ENCODE measurements at regions of chr17 and their contacts with region 1.

Region 1: DNA sequence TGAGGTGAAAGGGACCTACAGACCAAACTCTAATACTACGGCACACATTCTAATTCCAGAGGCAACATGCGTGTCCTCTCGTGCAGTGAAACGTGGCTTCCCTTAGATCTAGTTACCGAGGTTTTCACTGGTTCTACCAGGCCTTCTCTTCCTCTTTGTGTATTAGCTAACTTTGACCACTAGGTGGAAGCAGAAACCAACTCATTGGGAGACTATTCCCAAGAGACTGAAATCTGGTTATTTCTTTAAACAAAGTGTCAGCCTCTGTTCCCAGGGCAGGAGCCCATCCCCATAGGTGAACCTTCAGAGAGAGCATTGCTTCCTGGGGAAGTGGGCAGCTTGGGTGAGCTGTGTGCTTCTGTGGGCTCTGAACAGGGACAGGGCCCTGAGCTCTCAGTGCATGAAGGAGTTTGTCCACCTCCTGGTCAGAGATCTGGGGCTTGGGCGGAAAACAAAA is 19.7 kb upstream of the RCVRN start:
- DNase-seq: peak; percentile 89
- H3K4me3 Mint-ChIP-seq: no peak overlapping the region
- H3K27ac Mint-ChIP-seq: peak overlapping the region; percentile 22
- H3K4me1 Mint-ChIP-seq: peaks cover 6% of the 10 kb centered on the region
- H3K27me3 Mint-ChIP-seq: no peaks in the 10 kb centered on the region
- CTCF ChIP-seq: peak; percentile 80

Region 2: GRCh38 chr17:9729034-9729650 is 195.6 kb before region 1 on chr17:
- CTCF ChIA-PET with region 1: interaction called, 17 read pairs
- POLR2A ChIA-PET with region 1: interaction called, 3 read pairs
- intact Hi-C with region 1: loop called (anchors 1 kb)
- DNase-seq: peak; percentile 67
- H3K4me3 Mint-ChIP-seq: no peak overlapping the region
- H3K27ac Mint-ChIP-seq: no peak overlapping the region
- H3K4me1 Mint-ChIP-seq: peaks cover 7% of the 10 kb centered on the region
- H3K27me3 Mint-ChIP-seq: no peaks in the 10 kb centered on the region
- CTCF ChIP-seq: peak; percentile 89

Region 3: DNA sequence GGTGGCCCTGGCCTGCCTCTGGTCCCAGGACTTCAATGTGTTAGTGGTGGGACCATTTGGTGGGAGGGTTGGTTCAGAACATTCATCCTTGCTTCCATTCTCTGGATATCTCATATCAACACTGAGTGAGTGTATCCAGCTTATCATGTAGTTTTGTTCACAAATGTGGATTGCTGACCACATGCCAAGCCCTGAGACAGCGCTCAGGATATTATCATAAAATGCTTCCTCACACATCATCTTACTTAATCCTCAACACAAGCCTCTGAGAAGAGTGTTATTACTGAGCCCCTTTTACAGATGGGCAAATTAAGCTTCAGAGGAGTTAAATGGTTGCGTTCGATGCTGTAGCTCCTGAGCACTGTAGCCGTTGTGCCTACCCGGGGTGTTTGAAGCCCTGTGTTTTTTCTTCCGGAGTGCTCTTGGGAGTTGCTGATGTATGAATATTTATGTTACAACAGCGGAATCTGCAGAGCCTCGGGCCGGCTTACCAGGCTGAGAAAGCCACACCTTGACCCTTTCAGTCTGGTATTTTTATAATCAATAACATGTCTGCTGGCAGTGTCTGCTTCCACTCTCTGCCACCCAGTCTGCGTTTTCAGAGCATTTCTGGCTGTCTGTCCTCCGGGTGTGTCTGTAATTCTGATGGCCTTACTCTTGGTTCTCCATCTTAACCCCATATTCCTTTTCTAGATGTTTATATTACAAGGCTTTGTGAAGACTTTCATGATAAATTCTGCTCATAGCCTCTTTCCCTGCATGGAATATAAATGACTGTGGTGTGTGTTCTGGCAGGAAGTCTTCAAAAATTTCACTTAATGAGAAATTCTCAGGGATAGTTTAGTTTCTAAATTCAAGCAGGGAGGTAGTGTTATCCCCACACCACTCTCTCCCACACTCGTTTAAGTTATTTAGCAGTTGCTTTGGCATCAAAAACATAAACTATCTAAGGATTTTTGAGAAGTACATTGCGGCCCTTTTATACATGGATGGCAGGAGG is 96.2 kb before region 1 on chr17:
- CTCF ChIA-PET with region 1: no interaction called
- POLR2A ChIA-PET with region 1: no interaction called
- intact Hi-C with region 1: no loop called
- DNase-seq: no peak
- H3K4me3 Mint-ChIP-seq: no peak overlapping the region
- H3K27ac Mint-ChIP-seq: no peak overlapping the region
- H3K4me1 Mint-ChIP-seq: no peaks in the 10 kb centered on the region
- H3K27me3 Mint-ChIP-seq: no peaks in the 10 kb centered on the region
- CTCF ChIP-seq: no peak

Region 4: DNA sequence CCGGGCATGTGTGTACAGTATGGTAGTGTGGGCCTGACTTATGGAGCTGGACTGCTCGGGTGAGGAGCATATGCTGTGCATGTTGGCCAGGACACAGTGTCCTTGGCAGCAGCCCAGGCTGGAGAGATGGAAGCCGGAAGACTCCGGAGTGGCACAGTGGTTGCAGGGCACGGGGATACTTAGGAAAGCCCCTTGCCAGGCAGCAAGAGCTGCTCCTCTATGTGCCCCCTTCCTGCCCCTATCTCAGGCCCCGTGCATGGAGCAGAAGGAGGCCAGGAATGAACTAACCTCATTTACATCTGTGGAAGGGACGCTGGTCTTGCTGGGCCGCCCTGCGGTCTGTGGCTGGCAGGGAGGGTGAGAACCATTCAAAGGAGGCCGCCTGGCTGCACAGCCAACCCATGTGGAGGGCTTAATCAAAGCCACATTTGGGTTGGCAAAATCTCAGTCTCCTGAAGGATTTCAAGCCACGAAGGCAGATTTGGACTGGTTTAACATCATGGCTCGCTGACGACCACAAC is 12.5 kb after region 1 on chr17:
- CTCF ChIA-PET with region 1: interaction called, 23 read pairs
- POLR2A ChIA-PET with region 1: no interaction called
- intact Hi-C with region 1: no loop called
- DNase-seq: no peak
- H3K4me3 Mint-ChIP-seq: no peak overlapping the region
- H3K27ac Mint-ChIP-seq: no peak overlapping the region
- H3K4me1 Mint-ChIP-seq: peaks cover 7% of the 10 kb centered on the region
- H3K27me3 Mint-ChIP-seq: no peaks in the 10 kb centered on the region
- CTCF ChIP-seq: no peak

Measured in MCF 10A (cell line).